Stomach (tissue), 19 donors: ENCODE measurements at regions of chr15 and their contacts with region 1.

Region 1: GRCh38 chr15:32730677-32731654 is 13.2 kb downstream of the GREM1 start:
- DNase-seq: peak; percentile 90 to 94
- H3K4me3 ChIP-seq: no peak overlapping the region
- H3K27ac ChIP-seq: no peak overlapping the region
- H3K4me1 ChIP-seq: peaks cover 0 to 13% (median 5%) of the 10 kb centered on the region in 4 donors
- H3K27me3 ChIP-seq: no peaks in the 10 kb centered on the region
- CTCF ChIP-seq: no peak
- EP300 ChIP-seq: no peak
- POLR2A ChIP-seq: no peak

Region 2: GRCh38 chr15:31814082-31814481 is 916.9 kb before region 1 on chr15:
- intact Hi-C with region 1: no loop called
- DNase-seq: no peak
- H3K4me3 ChIP-seq: no peak overlapping the region
- H3K27ac ChIP-seq: no peak overlapping the region
- H3K4me1 ChIP-seq: no peaks in the 10 kb centered on the region
- H3K27me3 ChIP-seq: no peaks in the 10 kb centered on the region
- CTCF ChIP-seq: no peak
- EP300 ChIP-seq: no peak
- POLR2A ChIP-seq: no peak

Region 3: GRCh38 chr15:32641517-32642059 is 89.4 kb before region 1 on chr15 and contains the start of gene SCG5:
- intact Hi-C with region 1: no loop called
- DNase-seq: peak in 1 of 2 donors; percentile 85
- H3K4me3 ChIP-seq: peak within 1 kb of the TSS in 3 of 4 donors; percentile 24 to 36 (median 32)
- H3K27ac ChIP-seq: no peak within 1 kb of the TSS
- H3K4me1 ChIP-seq: peaks cover 0 to 10% (median 0%) of the 10 kb centered on the region in 4 donors
- H3K27me3 ChIP-seq: peaks cover 0 to 26% (median 0%) of the 10 kb centered on the region in 3 donors
- CTCF ChIP-seq: no peak
- EP300 ChIP-seq: no peak
- POLR2A ChIP-seq: no peak
- total RNA-seq, gene SCG5: 2.9 to 16.5 TPM in 2 of 5 donors, not detected in the others

Region 4: GRCh38 chr15:32781781-32782180 is 50.8 kb after region 1 on chr15:
- intact Hi-C with region 1: loop called (anchors 5 kb)
- DNase-seq: no peak
- H3K4me3 ChIP-seq: no peak overlapping the region
- H3K27ac ChIP-seq: no peak overlapping the region
- H3K4me1 ChIP-seq: no peaks in the 10 kb centered on the region
- H3K27me3 ChIP-seq: no peaks in the 10 kb centered on the region
- CTCF ChIP-seq: no peak
- EP300 ChIP-seq: no peak
- POLR2A ChIP-seq: no peak

Region 5: DNA sequence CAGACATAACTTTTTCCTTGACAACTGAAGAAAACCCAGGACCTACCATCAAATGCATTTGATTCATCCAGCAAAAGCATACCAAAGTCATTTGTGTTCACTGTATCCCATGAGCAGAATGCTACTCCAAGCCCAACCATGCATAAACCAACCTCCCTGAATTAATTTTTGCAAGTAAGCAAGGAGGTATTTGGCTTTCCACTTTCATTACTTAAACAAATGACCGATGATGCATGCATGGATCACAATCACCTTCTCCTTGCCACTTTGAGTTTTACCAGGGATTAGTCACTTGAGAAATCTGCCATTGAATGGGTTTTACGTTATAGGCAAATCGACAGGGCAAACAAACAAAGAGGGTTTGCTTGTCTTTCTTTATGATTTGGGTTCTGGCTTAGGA is 248.7 kb after region 1 on chr15:
- intact Hi-C with region 1: no loop called
- DNase-seq: peak in 1 of 2 donors; percentile 9
- H3K4me3 ChIP-seq: no peak overlapping the region
- H3K27ac ChIP-seq: no peak overlapping the region
- H3K4me1 ChIP-seq: no peaks in the 10 kb centered on the region
- H3K27me3 ChIP-seq: no peaks in the 10 kb centered on the region
- CTCF ChIP-seq: no peak
- EP300 ChIP-seq: no peak
- POLR2A ChIP-seq: no peak